ENCODE measurements at regions of chr4 and their contacts with region 1.

Region 1: GRCh38 chr4:173420324-173420752 is 21.4 kb upstream of the SCRG1 start:
- DNase-seq: no peak
- H3K4me3 Mint-ChIP-seq: no peak overlapping the region
- H3K27ac Mint-ChIP-seq: no peak overlapping the region
- H3K4me1 Mint-ChIP-seq: peaks cover 11% of the 10 kb centered on the region
- H3K27me3 Mint-ChIP-seq: no peaks in the 10 kb centered on the region

Region 2: GRCh38 chr4:173274744-173275143 is 145.6 kb before region 1 on chr4:
- CTCF ChIA-PET with region 1: no interaction called
- POLR2A ChIA-PET with region 1: no interaction called
- DNase-seq: no peak
- H3K4me3 Mint-ChIP-seq: no peak overlapping the region
- H3K27ac Mint-ChIP-seq: no peak overlapping the region
- H3K4me1 Mint-ChIP-seq: no peaks in the 10 kb centered on the region
- H3K27me3 Mint-ChIP-seq: no peaks in the 10 kb centered on the region

Region 3: GRCh38 chr4:173311368-173311767 is 109.0 kb before region 1 on chr4:
- CTCF ChIA-PET with region 1: interaction called, 13 read pairs
- POLR2A ChIA-PET with region 1: no interaction called
- DNase-seq: no peak
- H3K4me3 Mint-ChIP-seq: no peak overlapping the region
- H3K27ac Mint-ChIP-seq: no peak overlapping the region
- H3K4me1 Mint-ChIP-seq: no peaks in the 10 kb centered on the region
- H3K27me3 Mint-ChIP-seq: no peaks in the 10 kb centered on the region

Region 4: DNA sequence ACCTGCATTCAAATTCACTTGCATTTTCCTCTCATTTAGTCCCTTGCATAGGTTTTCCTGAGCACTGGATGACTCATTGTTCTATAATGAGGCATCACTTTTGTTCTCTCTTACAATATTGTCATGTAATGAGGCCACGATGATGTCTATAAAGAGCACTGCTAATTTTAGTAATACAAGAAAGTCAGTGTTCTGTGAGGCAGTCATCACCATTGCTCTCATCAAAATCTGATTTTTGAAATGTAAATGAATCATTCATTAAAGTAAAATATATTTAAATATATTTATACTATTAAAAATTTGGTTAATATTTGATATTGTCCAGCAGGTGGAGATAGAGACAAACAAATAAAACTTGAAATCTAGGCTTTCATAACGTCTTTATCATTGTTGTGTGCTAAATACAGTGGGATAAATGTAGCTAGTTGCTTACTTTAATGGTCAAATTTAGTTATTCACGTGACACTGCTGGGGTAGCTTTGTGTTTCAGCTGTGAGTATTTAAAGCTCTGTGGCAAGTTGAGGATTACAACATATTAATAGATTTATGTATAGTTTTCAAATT is 101.6 kb before region 1 on chr4:
- CTCF ChIA-PET with region 1: interaction called, 150 read pairs
- POLR2A ChIA-PET with region 1: interaction called, 3 read pairs
- DNase-seq: no peak
- H3K4me3 Mint-ChIP-seq: no peak overlapping the region
- H3K27ac Mint-ChIP-seq: no peak overlapping the region
- H3K4me1 Mint-ChIP-seq: peaks cover 8% of the 10 kb centered on the region
- H3K27me3 Mint-ChIP-seq: no peaks in the 10 kb centered on the region

Region 5: GRCh38 chr4:173346074-173346473 is 74.3 kb before region 1 on chr4:
- CTCF ChIA-PET with region 1: interaction called, 10 read pairs
- POLR2A ChIA-PET with region 1: no interaction called
- DNase-seq: no peak
- H3K4me3 Mint-ChIP-seq: no peak overlapping the region
- H3K27ac Mint-ChIP-seq: no peak overlapping the region
- H3K4me1 Mint-ChIP-seq: no peaks in the 10 kb centered on the region
- H3K27me3 Mint-ChIP-seq: peaks cover 16% of the 10 kb centered on the region

Region 6: GRCh38 chr4:173469622-173470021 is 49.3 kb after region 1 on chr4:
- CTCF ChIA-PET with region 1: no interaction called
- POLR2A ChIA-PET with region 1: no interaction called
- DNase-seq: no peak
- H3K4me3 Mint-ChIP-seq: no peak overlapping the region
- H3K27ac Mint-ChIP-seq: no peak overlapping the region
- H3K4me1 Mint-ChIP-seq: no peaks in the 10 kb centered on the region
- H3K27me3 Mint-ChIP-seq: no peaks in the 10 kb centered on the region

Region 7: DNA sequence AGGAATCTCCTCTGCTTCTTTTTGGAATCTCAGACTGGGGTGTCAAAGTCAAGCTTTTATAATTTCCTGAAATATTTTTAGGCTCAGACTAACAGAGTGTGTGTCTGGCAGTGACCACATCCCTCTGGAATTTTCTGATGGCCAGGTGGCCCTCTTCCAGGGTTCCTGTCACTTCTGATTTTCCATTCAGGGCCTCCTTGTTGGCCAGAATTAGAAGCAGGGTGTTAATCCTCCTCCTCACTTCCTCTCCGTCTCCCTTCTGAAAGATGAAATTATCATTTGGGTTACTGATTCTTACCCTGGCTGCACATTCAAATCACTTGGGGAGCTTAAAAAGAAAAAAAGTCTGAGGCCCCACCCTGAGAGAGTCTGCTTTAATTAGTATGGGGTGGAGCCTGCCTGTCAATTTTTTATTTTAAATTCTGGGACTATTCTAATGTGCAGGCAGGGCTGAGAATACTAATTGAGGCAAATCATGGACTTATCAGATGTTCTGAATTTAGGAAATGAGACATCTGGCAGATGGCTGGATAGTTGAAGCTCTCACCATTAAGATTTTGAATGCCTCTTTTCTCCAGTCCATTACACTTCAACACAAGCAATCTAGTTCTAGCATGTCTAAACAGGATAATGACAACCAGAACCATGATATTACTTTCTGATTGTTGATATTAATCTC is 66.5 kb after region 1 on chr4:
- CTCF ChIA-PET with region 1: interaction called, 16 read pairs
- POLR2A ChIA-PET with region 1: no interaction called
- DNase-seq: no peak
- H3K4me3 Mint-ChIP-seq: no peak overlapping the region
- H3K27ac Mint-ChIP-seq: no peak overlapping the region
- H3K4me1 Mint-ChIP-seq: peaks cover 6% of the 10 kb centered on the region
- H3K27me3 Mint-ChIP-seq: no peaks in the 10 kb centered on the region

Region 8: GRCh38 chr4:173494013-173494970 is 74.0 kb after region 1 on chr4:
- CTCF ChIA-PET with region 1: interaction called, 57 read pairs
- POLR2A ChIA-PET with region 1: interaction called, 5 read pairs
- DNase-seq: peak; percentile 71
- H3K4me3 Mint-ChIP-seq: peak overlapping the region; percentile 71
- H3K27ac Mint-ChIP-seq: no peak overlapping the region
- H3K4me1 Mint-ChIP-seq: peaks cover 22% of the 10 kb centered on the region
- H3K27me3 Mint-ChIP-seq: peaks cover 29% of the 10 kb centered on the region

Region 9: DNA sequence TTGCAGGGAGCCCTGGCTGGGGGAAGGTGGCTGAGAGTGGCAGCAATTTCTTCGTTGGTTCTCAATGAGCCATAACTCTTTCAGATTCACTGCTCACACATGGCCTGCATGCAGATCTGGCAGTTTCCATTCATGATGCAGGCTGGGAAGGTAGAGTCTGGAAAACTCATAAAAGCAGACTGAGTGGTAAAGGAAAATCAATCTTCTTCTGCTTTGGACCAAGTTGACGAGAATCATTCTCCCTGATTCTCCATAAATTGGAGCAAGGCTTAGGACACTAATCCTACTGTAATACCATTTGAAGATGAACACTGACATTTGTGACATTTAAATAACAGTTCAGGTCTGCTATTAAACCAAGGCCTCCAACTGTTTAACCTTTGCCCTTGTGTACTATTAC is 144.9 kb after region 1 on chr4:
- CTCF ChIA-PET with region 1: no interaction called
- POLR2A ChIA-PET with region 1: no interaction called
- DNase-seq: no peak
- H3K4me3 Mint-ChIP-seq: no peak overlapping the region
- H3K27ac Mint-ChIP-seq: no peak overlapping the region
- H3K4me1 Mint-ChIP-seq: no peaks in the 10 kb centered on the region
- H3K27me3 Mint-ChIP-seq: peaks cover 2% of the 10 kb centered on the region

Region 10: DNA sequence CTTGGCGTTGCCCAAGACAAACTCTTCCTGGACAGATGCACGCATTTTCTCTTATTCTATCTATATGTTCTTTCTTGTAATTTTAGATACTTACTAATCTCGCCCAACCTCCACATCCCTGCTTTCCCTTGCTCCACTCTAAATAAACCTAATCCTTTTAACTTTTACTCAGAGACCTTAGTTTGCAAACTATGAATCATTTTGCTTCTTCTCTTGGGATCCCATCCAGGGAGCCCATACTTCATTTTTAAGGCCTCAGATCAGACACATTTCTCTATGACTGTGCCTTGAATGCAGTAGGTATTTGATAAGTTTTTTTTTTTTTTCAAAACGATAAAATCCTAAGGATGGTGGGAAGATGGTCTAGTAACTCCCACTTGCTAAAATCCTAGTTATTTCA is 463.5 kb after region 1 on chr4:
- CTCF ChIA-PET with region 1: no interaction called
- POLR2A ChIA-PET with region 1: no interaction called
- DNase-seq: no peak
- H3K4me3 Mint-ChIP-seq: no peak overlapping the region
- H3K27ac Mint-ChIP-seq: no peak overlapping the region
- H3K4me1 Mint-ChIP-seq: no peaks in the 10 kb centered on the region
- H3K27me3 Mint-ChIP-seq: no peaks in the 10 kb centered on the region